ENCODE measurements at regions of chr2 and their contacts with region 1.

Region 1: DNA sequence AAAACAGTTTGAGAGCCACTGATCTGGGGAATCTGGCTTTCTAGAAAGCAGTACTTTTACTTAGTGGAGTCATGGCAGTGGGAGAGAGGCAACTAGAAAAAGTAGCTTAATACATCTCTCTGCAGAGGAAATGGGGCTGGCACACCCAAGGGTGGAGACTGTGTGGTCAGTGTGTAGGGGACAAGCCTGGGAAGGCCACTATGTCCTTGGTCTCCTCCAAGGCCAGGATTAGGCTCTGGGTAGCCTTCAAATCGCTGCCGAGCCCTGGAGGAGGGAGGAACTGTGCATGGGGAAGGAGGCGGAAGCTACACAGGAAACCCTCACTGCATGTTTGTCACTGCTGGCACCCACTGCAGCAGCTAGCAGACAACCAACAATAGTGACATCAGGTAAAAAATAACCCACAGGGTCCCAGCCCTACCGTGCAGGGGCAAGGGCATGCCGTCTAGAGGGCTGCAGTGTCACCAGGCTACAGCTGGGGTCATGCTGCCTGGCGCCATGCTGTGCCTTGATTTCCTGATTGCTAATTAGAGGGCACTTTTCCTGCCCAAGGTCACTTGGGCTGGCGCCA is 34.8 kb downstream of the LBH start:
- DNase-seq: peak; percentile 51
- H3K4me3 Mint-ChIP-seq: peak overlapping the region; percentile 84
- H3K27ac Mint-ChIP-seq: peak overlapping the region; percentile 97
- H3K4me1 Mint-ChIP-seq: peaks cover 82% of the 10 kb centered on the region
- H3K27me3 Mint-ChIP-seq: no peaks in the 10 kb centered on the region

Region 2: DNA sequence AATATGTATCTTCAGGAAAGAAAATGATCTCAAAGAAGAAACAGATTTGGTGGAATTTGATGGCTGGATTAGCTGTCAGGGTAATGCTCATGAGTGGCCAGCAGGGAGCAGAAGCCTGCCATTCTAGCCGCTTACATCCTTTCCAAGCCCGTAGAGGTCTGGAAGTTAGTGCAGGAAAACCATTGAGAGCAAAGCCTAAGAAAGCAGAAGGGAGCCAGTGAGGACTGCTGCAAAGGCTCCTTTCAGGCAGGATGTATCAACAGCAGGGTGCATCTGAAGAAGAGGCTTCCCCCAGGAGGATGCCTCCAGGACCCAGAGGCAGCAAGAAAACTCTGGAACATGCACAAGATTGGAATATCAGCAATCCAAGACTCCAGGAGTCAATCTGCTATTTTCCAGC is 57.7 kb before region 1 on chr2:
- intact Hi-C with region 1: loop called (anchors 2 kb)
- DNase-seq: no peak
- H3K4me3 Mint-ChIP-seq: no peak overlapping the region
- H3K27ac Mint-ChIP-seq: no peak overlapping the region
- H3K4me1 Mint-ChIP-seq: peaks cover 22% of the 10 kb centered on the region
- H3K27me3 Mint-ChIP-seq: peaks cover 6% of the 10 kb centered on the region

Region 3: GRCh38 chr2:30239308-30239985 is 26.7 kb before region 1 on chr2:
- intact Hi-C with region 1: loop called (anchors 1 kb)
- DNase-seq: peak; percentile 53
- H3K4me3 Mint-ChIP-seq: peak overlapping the region; percentile 61
- H3K27ac Mint-ChIP-seq: peak overlapping the region; percentile 86
- H3K4me1 Mint-ChIP-seq: peaks cover 75% of the 10 kb centered on the region
- H3K27me3 Mint-ChIP-seq: no peaks in the 10 kb centered on the region

Region 4: DNA sequence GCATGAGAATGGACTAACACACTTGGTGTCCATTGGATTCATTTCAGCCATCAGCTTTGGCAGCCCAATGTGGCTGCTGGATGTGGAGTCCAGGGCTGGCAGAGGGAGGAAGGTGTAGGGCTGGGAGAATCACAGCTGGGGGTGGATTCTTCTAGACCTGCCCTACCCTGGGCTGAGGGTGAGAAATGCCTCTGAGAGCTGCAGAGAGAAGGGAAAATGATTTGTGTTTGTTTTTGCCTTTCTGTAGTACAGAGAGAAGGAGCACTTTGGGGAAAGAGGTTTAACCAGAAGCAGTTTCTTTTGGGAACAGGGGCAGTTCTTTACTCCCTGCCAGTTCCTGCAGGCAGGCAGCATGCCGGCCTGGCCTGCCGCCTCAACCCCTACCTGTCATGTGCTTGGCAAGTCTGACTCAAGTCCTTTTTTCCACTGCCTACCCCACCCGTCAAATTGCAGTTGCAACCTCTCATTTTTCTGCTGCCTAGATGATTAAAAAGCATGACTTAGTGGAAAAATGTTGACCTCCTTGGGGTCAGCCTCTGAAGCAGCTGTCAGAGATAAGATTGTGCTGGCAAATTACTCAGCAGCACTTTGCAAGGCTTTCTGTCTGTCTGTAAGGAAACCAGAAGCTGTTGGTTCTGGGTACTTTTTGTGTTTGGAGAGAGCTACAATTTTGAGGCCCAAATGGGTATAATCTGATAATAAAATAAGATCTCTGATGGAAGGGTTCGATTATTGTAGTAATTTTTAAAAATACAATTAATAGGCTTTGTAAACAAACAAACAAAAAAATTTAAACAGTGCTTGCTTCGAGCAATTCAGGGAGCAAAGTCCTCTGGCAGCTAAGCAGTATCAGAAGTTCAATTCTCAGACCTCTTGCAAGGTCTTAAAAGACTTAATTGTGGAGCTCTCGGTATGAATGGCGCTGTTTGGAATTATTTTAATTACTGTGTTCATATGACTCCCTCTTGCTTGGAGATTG is 13.1 kb before region 1 on chr2:
- intact Hi-C with region 1: loop called (anchors 1 kb)
- DNase-seq: peak; percentile 48
- H3K4me3 Mint-ChIP-seq: peak overlapping the region; percentile 53
- H3K27ac Mint-ChIP-seq: peak overlapping the region; percentile 93
- H3K4me1 Mint-ChIP-seq: peaks cover 92% of the 10 kb centered on the region
- H3K27me3 Mint-ChIP-seq: no peaks in the 10 kb centered on the region

Region 5: DNA sequence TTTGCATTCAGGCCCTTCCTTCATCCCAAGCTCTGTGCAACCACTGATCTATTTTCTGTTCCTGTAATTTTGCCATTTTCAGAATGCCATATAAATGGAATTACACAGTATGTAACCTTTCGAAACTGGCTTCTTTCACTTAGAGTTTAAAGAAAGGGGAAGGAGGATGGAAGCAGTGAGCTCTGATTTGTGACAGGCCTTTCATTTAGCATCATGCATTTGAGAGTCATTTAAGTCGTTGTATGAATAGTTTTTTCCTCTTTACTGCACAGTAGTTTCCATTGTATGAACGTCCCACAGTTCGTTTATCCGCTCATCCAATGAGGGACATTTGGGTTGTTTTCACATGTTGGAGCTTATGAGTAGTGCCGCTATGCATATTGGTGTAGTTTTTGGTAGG is 32.2 kb after region 1 on chr2:
- intact Hi-C with region 1: loop called (anchors 2 kb)
- DNase-seq: no peak
- H3K4me3 Mint-ChIP-seq: no peak overlapping the region
- H3K27ac Mint-ChIP-seq: peak overlapping the region; percentile 80
- H3K4me1 Mint-ChIP-seq: peaks cover 26% of the 10 kb centered on the region
- H3K27me3 Mint-ChIP-seq: peaks cover 3% of the 10 kb centered on the region

Region 6: DNA sequence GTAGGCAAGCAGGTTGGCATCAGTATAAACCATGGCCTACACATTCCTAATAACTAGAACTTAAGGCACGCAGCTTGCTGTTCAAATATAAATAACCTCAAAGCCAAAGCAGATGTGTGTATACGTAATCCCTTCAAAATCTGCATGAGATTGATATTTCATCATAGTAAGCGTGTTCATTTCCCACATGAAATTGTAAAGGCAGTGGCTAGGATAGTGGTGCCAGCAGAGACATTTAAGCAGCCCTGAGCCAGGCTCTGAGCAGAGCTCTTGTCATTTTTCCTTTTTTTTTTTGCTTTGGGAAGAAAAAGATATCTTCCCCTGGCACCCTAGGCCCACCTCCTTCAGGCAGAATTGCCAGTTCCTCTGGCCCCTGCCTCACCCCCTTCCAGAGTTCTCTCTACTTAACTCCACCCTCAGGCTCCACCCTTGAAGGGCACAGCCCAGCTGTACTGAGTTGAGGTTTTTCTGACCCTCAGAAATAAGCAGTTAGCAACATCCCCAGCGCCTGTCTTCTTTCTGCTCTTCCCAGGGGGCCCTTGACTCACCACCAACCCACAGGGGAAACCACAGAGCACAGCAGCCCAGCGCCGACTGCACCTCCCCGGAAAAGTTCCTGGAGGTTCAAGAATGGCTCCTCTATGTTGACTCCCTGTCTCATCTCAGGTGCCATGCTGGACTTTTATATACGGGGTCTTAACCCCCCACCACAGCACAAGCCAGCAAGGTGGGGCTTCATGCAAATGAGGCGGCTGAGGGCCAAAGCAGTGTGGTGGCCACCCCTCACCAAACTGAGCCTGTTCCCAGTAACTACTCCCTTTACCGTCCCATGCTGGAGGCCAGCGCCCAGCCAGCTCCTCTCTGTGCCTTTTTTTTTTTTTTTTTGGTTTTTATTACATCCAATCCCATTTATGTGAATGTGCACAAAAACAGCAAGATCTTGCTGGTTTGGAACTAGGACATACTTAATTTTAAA is 1052.5 kb after region 1 on chr2:
- intact Hi-C with region 1: loop called (anchors 5 kb)
- DNase-seq: peak; percentile 44
- H3K4me3 Mint-ChIP-seq: peak overlapping the region; percentile 43
- H3K27ac Mint-ChIP-seq: peak overlapping the region; percentile 54
- H3K4me1 Mint-ChIP-seq: peaks cover 58% of the 10 kb centered on the region
- H3K27me3 Mint-ChIP-seq: peaks cover 4% of the 10 kb centered on the region

Measured in activated T-helper 1 cell treated with anti-CD3 and anti-CD28 coated beads, Interleukin-12 subunit alpha, Interleukin-12 subunit beta, Interleukin-2, Interleukin-4 antibody, amounts not matched to agents 30 ng/mL and 10 ng/mL and 1 ng/mL, durations not matched to agents 14 hours and 24 hours and 36 hours (primary cell).